Activated naive CD4-positive, alpha-beta T cell treated with anti-CD3 and anti-CD28 coated beads, Interleukin-2, amount 10 ng/mL, durations not matched to agents 7 days and 5 days (primary cell): ENCODE measurements at regions of chrX and their contacts with region 1.

Region 1: GRCh38 chrX:12974796-12975669 is at the start of gene TMSB4X:
- DNase-seq: peak; percentile 89
- H3K4me3 Mint-ChIP-seq: peak within 1 kb of the TSS; percentile 97
- H3K27ac Mint-ChIP-seq: peak within 1 kb of the TSS; percentile 99
- H3K4me1 Mint-ChIP-seq: peaks cover 39% of the 10 kb centered on the region
- H3K27me3 Mint-ChIP-seq: peaks cover 14% of the 10 kb centered on the region

Region 2: GRCh38 chrX:12956704-12957534 is 18.1 kb before region 1 on chrX:
- CTCF ChIA-PET with region 1: interaction called, 14 read pairs
- DNase-seq: peak; percentile 72
- H3K4me3 Mint-ChIP-seq: peak overlapping the region; percentile 81
- H3K27ac Mint-ChIP-seq: peak overlapping the region; percentile 99
- H3K4me1 Mint-ChIP-seq: peaks cover 80% of the 10 kb centered on the region
- H3K27me3 Mint-ChIP-seq: no peaks in the 10 kb centered on the region

Region 3: GRCh38 chrX:12988797-12989196 is 13.8 kb after region 1 on chrX:
- CTCF ChIA-PET with region 1: no interaction called
- DNase-seq: no peak
- H3K4me3 Mint-ChIP-seq: no peak overlapping the region
- H3K27ac Mint-ChIP-seq: no peak overlapping the region
- H3K4me1 Mint-ChIP-seq: peaks cover 65% of the 10 kb centered on the region
- H3K27me3 Mint-ChIP-seq: no peaks in the 10 kb centered on the region

Region 4: GRCh38 chrX:13000301-13000811 is 25.3 kb after region 1 on chrX:
- CTCF ChIA-PET with region 1: interaction called, 14 read pairs
- DNase-seq: peak; percentile 55
- H3K4me3 Mint-ChIP-seq: peak overlapping the region; percentile 70
- H3K27ac Mint-ChIP-seq: peak overlapping the region; percentile 98
- H3K4me1 Mint-ChIP-seq: peaks cover 84% of the 10 kb centered on the region
- H3K27me3 Mint-ChIP-seq: no peaks in the 10 kb centered on the region

Region 5: GRCh38 chrX:13087322-13088155 is 112.5 kb after region 1 on chrX:
- CTCF ChIA-PET with region 1: interaction called, 12 read pairs
- DNase-seq: peak; percentile 72
- H3K4me3 Mint-ChIP-seq: peak overlapping the region; percentile 81
- H3K27ac Mint-ChIP-seq: peak overlapping the region; percentile 97
- H3K4me1 Mint-ChIP-seq: peaks cover 93% of the 10 kb centered on the region
- H3K27me3 Mint-ChIP-seq: no peaks in the 10 kb centered on the region

Region 6: GRCh38 chrX:13293700-13294099 is 318.7 kb after region 1 on chrX:
- CTCF ChIA-PET with region 1: no interaction called
- DNase-seq: no peak
- H3K4me3 Mint-ChIP-seq: no peak overlapping the region
- H3K27ac Mint-ChIP-seq: no peak overlapping the region
- H3K4me1 Mint-ChIP-seq: no peaks in the 10 kb centered on the region
- H3K27me3 Mint-ChIP-seq: no peaks in the 10 kb centered on the region